AG04449 (cell line): ENCODE measurements at regions of chr12 and their contacts with region 1.

Region 1: DNA sequence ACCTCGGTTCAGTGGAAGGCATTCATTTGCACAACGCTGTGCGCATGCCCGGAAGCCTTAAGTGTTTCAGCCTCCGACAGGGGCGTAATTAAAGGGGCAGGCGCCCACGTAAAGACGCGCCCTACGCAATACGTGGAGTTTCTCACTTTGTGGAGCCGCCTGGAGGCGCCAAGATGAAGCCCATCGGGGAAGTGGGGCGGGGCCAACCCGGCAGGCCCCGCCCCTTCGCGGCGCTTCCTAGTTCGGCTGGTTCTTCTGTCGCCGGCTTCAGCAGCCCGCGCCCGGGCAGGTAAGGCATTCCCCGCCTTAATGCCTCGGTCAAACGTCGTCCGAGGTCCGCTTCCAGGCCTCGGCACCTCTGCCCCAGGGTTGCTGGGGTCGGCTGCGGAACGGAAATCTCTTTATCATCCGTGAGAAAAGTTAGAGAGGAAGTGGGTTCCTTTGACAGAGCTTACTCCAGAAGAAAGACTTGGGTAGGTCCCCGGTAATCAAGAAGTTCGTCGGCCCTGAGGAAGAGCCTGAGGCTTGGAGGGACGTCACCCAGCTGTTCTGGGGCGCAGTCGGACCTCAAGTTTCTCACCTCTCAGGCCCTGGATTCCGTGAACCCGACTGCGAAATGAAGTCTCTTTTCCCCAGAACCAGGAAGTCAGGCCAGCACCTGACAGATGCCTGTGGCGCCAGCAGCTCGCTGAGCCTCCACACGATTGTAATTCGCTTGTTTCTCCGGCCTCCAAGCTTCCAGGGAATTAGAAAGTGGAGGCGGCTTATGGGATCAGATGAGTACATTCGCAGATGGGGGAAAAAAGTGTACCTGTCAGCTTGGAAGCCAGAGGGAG is at the starts of genes IRAK4 and PUS7L:
- DNase-seq: peak; percentile 72
- H3K4me3 ChIP-seq: peak within 1 kb of the TSS; percentile 85
- CTCF ChIP-seq: peak; percentile 55

Region 2: GRCh38 chr12:43551971-43552559 is 206.9 kb before region 1 on chr12 and contains the start of gene ADAMTS20:
- CTCF ChIA-PET with region 1: no interaction called
- POLR2A ChIA-PET with region 1: no interaction called
- DNase-seq: no peak
- H3K4me3 ChIP-seq: peak within 1 kb of the TSS; percentile 37
- CTCF ChIP-seq: no peak

Region 3: DNA sequence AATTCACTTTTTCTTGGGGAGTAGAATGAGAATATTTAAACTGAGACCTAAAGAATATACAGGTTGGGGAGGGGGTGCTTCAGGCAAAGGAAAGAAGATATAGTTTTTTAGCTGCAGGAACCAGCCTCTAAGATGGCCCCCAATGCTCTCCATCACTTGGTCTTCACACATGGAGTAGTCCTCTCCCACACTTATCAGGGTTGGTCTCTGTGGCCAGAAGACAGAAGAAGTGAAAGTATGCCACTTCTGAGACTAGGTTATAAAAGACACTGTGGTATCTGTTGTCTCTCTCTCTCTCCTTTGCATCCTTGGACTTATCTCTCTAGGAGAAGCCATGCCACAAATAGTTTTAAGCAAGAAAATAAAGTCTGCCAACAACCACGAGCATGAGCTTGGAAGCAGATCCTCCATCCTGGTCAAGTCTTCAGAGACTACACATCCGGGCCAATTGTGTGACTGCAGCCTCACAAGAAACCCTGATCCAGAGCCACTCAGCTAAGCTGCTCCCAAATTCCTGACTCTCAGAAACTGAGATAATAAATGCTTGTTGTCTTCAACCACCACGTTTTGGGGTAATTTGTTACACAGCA is 18.3 kb before region 1 on chr12:
- CTCF ChIA-PET with region 1: interaction called, 12 read pairs
- POLR2A ChIA-PET with region 1: no interaction called
- DNase-seq: no peak
- H3K4me3 ChIP-seq: no peak overlapping the region
- CTCF ChIP-seq: no peak

Region 4: DNA sequence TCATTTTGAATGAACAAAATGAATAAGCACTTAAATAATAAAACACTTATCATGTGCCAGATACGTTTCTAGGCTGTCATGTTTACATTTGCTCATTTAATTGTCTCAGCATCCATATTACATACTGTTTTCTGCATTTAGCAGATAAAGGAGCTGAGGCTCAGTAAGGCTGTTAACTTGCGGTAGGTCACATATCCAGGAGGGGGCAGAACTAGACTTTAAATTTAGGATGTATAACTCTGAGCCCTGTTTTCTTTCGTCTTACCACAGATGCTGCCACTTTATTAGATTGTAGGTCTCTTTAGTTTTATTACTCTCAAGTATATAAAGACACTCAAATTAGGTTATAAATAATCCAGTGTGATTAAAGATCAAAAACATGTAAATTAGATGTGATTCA is 17.6 kb after region 1 on chr12:
- CTCF ChIA-PET with region 1: interaction called, 15 read pairs
- POLR2A ChIA-PET with region 1: no interaction called
- DNase-seq: no peak
- H3K4me3 ChIP-seq: no peak overlapping the region
- CTCF ChIP-seq: peak; percentile 31